Naive thymus-derived CD8-positive, alpha-beta T cell (primary cell): ENCODE measurements at regions of chrX and their contacts with region 1.

Region 1: GRCh38 chrX:135521405-135522189 is 1.1 kb downstream of the INTS6L start:
- DNase-seq: peak; percentile 70 to 94 (median 83)
- ATAC-seq: peak; percentile 62 to 66
- H3K4me3 Mint-ChIP-seq: peak overlapping the region; percentile 95 to 100 (median 98)
- H3K27ac Mint-ChIP-seq: peak overlapping the region; percentile 88 to 100 (median 98)
- H3K4me1 Mint-ChIP-seq: peaks cover 16 to 51% (median 43%) of the 10 kb centered on the region in 4 donors
- H3K27me3 Mint-ChIP-seq: no peaks in the 10 kb centered on the region

Region 2: DNA sequence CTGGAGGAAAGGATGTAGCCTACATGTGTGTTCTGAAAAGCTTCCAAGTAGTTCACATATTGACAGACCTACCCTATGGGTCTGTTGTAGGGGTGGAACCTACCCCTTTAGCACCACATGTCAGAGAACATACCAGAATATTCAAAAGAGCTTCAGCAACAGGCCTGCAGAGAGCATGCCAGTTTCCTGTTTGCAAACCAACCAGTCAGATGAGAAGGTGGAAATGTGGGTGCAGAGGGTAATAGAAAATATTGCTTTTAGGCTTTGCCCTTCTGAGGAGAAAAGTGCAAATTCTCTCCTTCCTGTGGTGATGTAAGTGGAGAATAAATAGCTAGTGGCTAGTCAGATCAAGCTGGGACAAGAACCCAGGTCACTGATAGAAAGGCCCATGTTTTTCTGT is 15.3 kb after region 1 on chrX:
- POLR2A ChIA-PET with region 1: interaction called, 14 read pairs
- DNase-seq: peak in 3 of 10 donors; percentile 6 to 26 (median 22)
- ATAC-seq: peak; percentile 72 to 94
- H3K4me3 Mint-ChIP-seq: peak overlapping the region in 9 of 10 donors; percentile 22 to 71 (median 33)
- H3K27ac Mint-ChIP-seq: peak overlapping the region; percentile 5 to 88 (median 58)
- H3K4me1 Mint-ChIP-seq: peaks cover 14 to 70% (median 58%) of the 10 kb centered on the region in 4 donors
- H3K27me3 Mint-ChIP-seq: no peaks in the 10 kb centered on the region

Region 3: GRCh38 chrX:135543924-135544323 is 22.3 kb after region 1 on chrX:
- POLR2A ChIA-PET with region 1: interaction called, 11 read pairs
- DNase-seq: peak in 9 of 10 donors; percentile 4 to 69 (median 30)
- ATAC-seq: peak; percentile 67 to 78
- H3K4me3 Mint-ChIP-seq: peak overlapping the region in 2 of 10 donors; percentile 40 to 54
- H3K27ac Mint-ChIP-seq: peak overlapping the region in 7 of 10 donors; percentile 9 to 89 (median 51)
- H3K4me1 Mint-ChIP-seq: peaks cover 17 to 48% (median 38%) of the 10 kb centered on the region in 4 donors
- H3K27me3 Mint-ChIP-seq: no peaks in the 10 kb centered on the region